ENCODE measurements at regions of chr10 and their contacts with region 1.

Region 1: GRCh38 chr10:35126530-35127296 is at the start of gene CREM:
- DNase-seq: peak; percentile 90

Region 2: DNA sequence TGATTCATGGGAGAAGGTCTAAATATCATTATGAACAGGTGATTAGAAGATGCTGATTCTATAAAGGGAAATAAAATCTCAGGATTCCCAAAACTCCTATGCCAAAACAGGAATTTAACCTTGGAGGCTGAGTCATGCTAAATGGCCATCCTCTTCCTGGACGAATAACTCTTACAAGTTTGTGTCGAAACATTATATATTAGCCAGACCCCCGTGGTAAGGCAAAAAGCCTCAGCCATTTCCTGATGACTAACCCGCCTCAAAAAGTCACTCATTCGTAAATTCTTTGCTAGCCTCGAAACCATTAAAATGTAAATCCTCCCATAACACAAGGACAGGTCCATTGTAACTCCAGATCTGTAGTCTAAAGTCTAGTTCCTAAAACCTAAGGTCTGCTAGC is 68.6 kb before region 1 on chr10:
- CTCF ChIA-PET with region 1: no interaction called
- POLR2A ChIA-PET with region 1: no interaction called
- DNase-seq: no peak

Region 3: GRCh38 chr10:35090162-35090954 is 36.4 kb before region 1 on chr10 and contains the start of gene CUL2:
- CTCF ChIA-PET with region 1: no interaction called
- POLR2A ChIA-PET with region 1: interaction called, 10 read pairs
- DNase-seq: peak; percentile 79

Region 4: DNA sequence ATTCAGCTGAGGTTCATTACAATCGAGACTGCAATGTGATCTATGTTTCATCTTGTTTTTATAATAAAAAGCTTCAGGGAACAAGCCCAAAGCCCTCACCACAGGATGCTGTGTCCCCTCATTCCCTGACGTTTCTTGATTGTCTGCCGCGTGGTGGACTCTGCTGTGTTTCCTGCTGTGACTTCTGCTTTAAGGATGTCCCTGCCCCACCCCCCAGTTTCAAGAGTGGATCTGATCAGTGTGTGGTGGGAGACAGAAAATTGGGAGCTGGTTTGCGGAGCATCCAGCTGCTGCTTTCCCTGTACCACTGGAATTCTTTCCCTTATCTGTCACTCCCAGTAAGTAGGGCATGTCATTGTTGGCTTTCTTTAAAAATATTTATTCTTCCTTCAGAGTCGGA is 86.1 kb after region 1 on chr10:
- CTCF ChIA-PET with region 1: interaction called, 22 read pairs
- POLR2A ChIA-PET with region 1: interaction called, 29 read pairs
- DNase-seq: no peak

Region 5: DNA sequence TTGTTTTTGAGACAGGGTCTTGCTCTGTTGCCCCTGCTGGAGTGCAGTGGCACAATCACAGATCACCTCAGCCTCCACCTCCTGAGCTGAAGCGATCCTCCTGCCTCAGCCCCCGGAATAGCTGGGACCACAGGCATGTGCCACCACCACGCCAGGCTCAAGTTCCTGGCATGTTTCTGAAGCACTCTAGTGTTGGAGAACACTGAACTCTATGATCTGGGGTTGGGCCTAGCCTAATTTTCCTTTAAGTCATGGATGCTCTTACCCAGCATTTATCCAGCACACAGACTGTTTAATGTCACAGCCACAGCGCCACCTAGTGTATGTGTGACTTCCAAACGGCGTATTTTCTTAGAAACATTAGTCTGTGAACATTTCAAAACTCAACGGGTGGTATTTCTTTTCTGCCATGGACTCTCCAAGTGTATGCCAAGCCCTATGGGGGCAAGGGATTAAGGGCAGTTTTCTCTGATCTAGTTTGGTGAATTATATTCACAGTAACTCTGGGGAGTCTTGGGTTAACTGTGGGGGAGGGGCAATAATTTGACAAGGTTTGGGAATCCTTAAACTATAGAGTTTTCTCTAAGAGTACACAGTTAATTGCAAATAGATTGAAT is 91.7 kb after region 1 on chr10:
- CTCF ChIA-PET with region 1: interaction called, 22 read pairs
- POLR2A ChIA-PET with region 1: interaction called, 29 read pairs
- DNase-seq: peak; percentile 62

Region 6: GRCh38 chr10:35274498-35275060 is 147.9 kb after region 1 on chr10:
- CTCF ChIA-PET with region 1: no interaction called
- POLR2A ChIA-PET with region 1: no interaction called
- DNase-seq: no peak

Measured in HEK293T (cell line).